IMR-90 (cell line): ENCODE measurements at regions of chr6 and their contacts with region 1.

Region 1: DNA sequence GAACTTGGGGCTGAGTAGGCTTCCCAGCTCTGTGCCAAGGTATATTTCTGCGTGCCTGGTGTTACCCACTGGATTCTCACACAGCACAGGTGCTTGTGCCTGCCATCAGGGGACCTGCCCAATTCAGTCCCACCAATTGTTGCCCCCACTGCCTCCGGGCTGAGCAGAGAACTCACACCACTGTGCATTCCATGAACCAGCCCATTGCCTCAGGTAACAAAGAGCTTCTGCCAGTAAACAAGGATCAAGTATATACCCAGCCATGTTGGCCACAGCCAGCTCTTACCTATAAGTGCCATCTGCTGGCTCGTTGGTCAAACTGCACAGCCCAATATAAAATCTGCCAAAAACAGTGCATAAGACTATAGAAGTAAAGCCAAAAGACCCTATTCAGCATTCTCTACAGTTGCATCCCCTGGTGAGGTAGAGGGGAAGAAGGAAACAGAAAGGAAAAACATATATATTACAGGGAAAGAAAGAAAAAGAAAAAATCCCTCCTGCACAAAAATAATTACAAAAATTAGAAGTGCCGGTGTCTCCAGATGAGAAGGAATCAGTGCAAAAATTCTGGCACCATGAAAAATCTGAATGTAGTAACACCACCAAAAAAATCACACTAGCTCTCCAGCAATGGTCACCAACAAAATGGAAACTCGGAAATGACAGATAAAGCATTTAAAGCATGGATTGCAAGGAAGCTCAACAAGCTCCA is 241.4 kb downstream of the IBTK start:
- DNase-seq: peak; percentile 40
- ATAC-seq: peak; percentile 79
- H3K4me3 ChIP-seq: no peak overlapping the region
- H3K27ac ChIP-seq: no peak overlapping the region
- H3K4me1 ChIP-seq: no peaks in the 10 kb centered on the region
- H3K27me3 ChIP-seq: no peaks in the 10 kb centered on the region
- CTCF ChIP-seq: peak; percentile 65
- POLR2A ChIP-seq: no peak
- RAD21 ChIP-seq: peak; percentile 80

Region 2: DNA sequence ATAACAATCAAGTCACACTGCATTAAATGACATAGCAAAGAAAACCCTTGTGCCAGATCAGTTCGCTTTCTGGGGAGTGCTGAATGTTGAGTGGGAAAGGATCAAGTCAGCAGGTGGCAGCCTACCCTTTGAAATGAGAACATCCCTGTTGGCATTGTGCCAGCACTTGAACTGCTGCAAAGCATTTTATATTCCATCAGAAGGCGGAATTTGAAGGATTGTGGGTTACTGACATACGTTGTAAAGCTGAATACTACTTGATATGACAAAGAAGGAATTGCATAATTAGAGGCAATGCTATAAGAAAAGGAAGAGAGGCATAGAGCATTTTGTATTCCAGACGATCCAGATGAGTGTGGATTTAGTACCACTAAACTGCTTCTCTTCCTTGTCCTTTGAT is 1873.2 kb before region 1 on chr6:
- CTCF ChIA-PET with region 1: no interaction called
- POLR2A ChIA-PET with region 1: no interaction called
- dilution Hi-C with region 1: no loop called
- in situ Hi-C with region 1: no loop called
- intact Hi-C with region 1: loop called (anchors 10 kb)
- DNase-seq: peak; percentile 72
- ATAC-seq: no peak
- H3K4me3 ChIP-seq: no peak overlapping the region
- H3K27ac ChIP-seq: no peak overlapping the region
- H3K4me1 ChIP-seq: no peaks in the 10 kb centered on the region; the same call in 1 of the 2 replicates
- H3K27me3 ChIP-seq: no peaks in the 10 kb centered on the region
- CTCF ChIP-seq: peak; percentile 59
- POLR2A ChIP-seq: no peak
- RAD21 ChIP-seq: peak; percentile 76

Region 3: DNA sequence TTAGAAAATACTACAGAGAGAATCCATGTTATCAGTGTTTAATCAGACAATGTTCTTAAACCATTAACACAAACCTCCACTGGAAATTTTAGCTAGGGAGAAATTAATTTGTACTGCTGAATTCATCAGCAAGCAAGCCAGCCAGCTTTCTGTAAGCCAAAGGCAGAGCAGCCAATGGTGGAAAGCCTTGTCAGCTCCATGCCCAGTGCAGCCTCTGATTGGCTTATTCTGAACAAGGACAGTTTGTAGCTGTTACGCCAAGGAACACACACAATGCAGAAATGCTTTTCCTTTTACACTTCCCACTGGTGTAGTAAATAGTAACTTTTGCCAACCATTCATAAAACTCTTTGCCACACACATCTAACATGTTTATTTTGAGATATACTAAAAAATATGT is 518.7 kb before region 1 on chr6:
- CTCF ChIA-PET with region 1: no interaction called
- POLR2A ChIA-PET with region 1: no interaction called
- dilution Hi-C with region 1: no loop called
- in situ Hi-C with region 1: no loop called
- intact Hi-C with region 1: loop called (anchors 10 kb)
- DNase-seq: peak; percentile 62
- ATAC-seq: peak; percentile 90
- H3K4me3 ChIP-seq: no peak overlapping the region
- H3K27ac ChIP-seq: no peak overlapping the region
- H3K4me1 ChIP-seq: no peaks in the 10 kb centered on the region
- H3K27me3 ChIP-seq: no peaks in the 10 kb centered on the region
- CTCF ChIP-seq: no peak
- POLR2A ChIP-seq: no peak
- RAD21 ChIP-seq: no peak

Region 4: GRCh38 chr6:82283771-82284410 is 277.7 kb after region 1 on chr6:
- CTCF ChIA-PET with region 1: no interaction called
- POLR2A ChIA-PET with region 1: interaction called, 11 read pairs
- dilution Hi-C with region 1: no loop called
- in situ Hi-C with region 1: no loop called
- intact Hi-C with region 1: no loop called
- DNase-seq: no peak
- ATAC-seq: no peak
- H3K4me3 ChIP-seq: no peak overlapping the region
- H3K27ac ChIP-seq: no peak overlapping the region
- H3K4me1 ChIP-seq: no peaks in the 10 kb centered on the region
- H3K27me3 ChIP-seq: peaks cover 4% of the 10 kb centered on the region
- CTCF ChIP-seq: no peak
- POLR2A ChIP-seq: no peak
- RAD21 ChIP-seq: no peak